ENCODE measurements at regions of chr7 and their contacts with region 1.

Region 1: DNA sequence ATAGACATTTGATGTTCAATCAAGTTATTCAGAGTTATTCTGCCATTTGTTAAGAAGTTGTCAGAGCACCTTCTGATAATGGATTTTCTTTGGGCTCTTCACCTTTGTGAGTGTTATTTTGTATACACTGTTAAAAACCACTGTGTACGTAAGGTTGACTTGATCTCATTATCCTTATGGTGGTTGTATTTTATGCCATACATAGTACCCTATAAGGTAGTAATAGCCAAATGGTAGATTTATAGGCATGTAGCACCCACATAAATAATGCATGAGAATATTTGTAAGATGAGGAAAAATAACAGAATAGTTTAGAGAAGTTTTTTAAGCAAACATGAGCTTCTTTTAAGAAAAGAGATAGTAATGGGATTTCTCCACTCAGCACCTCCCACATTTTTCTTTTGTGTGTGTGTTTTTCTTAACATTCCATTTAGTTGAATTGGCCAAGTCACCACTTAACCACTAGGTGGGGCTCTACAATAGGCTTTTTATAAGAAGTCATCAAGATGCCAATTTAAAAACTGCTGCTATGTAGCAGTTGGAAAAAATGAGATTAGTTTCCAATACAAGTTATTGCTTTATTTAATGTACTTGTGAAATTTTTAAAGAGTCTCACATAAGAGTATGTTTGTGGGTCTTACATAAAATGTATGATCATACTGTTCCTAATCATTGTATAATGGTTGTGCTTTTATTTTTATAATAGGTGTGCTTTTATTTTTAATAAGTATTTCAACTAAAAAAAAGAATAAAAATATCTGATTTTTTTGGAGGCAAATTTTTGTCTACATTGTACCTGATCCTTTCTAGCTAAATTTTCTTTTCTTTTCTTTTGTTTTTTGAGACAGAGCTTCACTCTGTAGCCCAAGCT is 41.1 kb upstream of the STMP1 start:
- DNase-seq: peak; percentile 76
- H3K4me3 Mint-ChIP-seq: no peak overlapping the region
- H3K27ac Mint-ChIP-seq: no peak overlapping the region
- H3K4me1 Mint-ChIP-seq: peaks cover 6% of the 10 kb centered on the region
- H3K27me3 Mint-ChIP-seq: no peaks in the 10 kb centered on the region
- CTCF ChIP-seq: peak; percentile 77

Region 2: GRCh38 chr7:135601182-135601581 is 20.0 kb before region 1 on chr7:
- CTCF ChIA-PET with region 1: interaction called, 10 read pairs
- POLR2A ChIA-PET with region 1: no interaction called
- intact Hi-C with region 1: no loop called
- DNase-seq: peak; percentile 18
- H3K4me3 Mint-ChIP-seq: no peak overlapping the region
- H3K27ac Mint-ChIP-seq: no peak overlapping the region
- H3K4me1 Mint-ChIP-seq: peaks cover 5% of the 10 kb centered on the region
- H3K27me3 Mint-ChIP-seq: no peaks in the 10 kb centered on the region
- CTCF ChIP-seq: no peak

Region 3: GRCh38 chr7:135634191-135634878 is 13.1 kb after region 1 on chr7:
- CTCF ChIA-PET with region 1: interaction called, 10 read pairs
- POLR2A ChIA-PET with region 1: interaction called, 5 read pairs
- intact Hi-C with region 1: no loop called
- DNase-seq: no peak
- H3K4me3 Mint-ChIP-seq: no peak overlapping the region
- H3K27ac Mint-ChIP-seq: peak overlapping the region; percentile 4
- H3K4me1 Mint-ChIP-seq: no peaks in the 10 kb centered on the region
- H3K27me3 Mint-ChIP-seq: no peaks in the 10 kb centered on the region
- CTCF ChIP-seq: no peak

Region 4: GRCh38 chr7:135645296-135645904 is 24.2 kb after region 1 on chr7:
- CTCF ChIA-PET with region 1: interaction called, 134 read pairs
- POLR2A ChIA-PET with region 1: interaction called, 3 read pairs
- intact Hi-C with region 1: loop called (anchors 1 kb)
- DNase-seq: peak; percentile 57
- H3K4me3 Mint-ChIP-seq: no peak overlapping the region
- H3K27ac Mint-ChIP-seq: no peak overlapping the region
- H3K4me1 Mint-ChIP-seq: no peaks in the 10 kb centered on the region
- H3K27me3 Mint-ChIP-seq: no peaks in the 10 kb centered on the region
- CTCF ChIP-seq: peak; percentile 46